Activated B cell treated with CpG ODN at 0.5 μM for 24 hours (primary cell): ENCODE measurements at regions of chr2 and their contacts with region 1.

Region 1: GRCh38 chr2:221203125-221203524 is 369.0 kb downstream of the EPHA4 start:
- DNase-seq: peak; percentile 31
- ATAC-seq: peak; percentile 92
- H3K4me3 Mint-ChIP-seq: peak overlapping the region; percentile 37
- H3K27ac Mint-ChIP-seq: peak overlapping the region; percentile 60
- H3K4me1 Mint-ChIP-seq: peaks cover 55% of the 10 kb centered on the region
- H3K27me3 Mint-ChIP-seq: no peaks in the 10 kb centered on the region
- CTCF ChIP-seq: no peak

Region 2: DNA sequence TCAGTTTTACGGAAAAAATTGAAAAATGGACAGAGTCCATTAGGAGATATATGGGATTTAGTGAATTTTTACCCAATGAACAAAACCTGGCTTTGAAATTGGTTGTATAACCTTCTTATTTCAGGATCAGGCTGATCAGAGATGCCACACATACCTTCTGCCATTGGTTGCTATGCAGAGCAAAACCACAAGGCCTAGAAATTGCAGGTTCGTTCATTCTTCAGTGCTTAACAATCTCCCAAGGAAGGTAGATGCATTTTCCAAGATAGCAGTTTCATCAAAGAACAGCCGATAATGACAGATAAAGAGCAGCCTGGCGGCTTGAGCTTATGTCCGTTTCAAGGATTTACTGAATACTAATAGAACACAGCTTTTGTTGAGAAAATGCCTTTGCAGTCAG is 499.8 kb before region 1 on chr2:
- CTCF ChIA-PET with region 1: no interaction called
- POLR2A ChIA-PET with region 1: no interaction called
- intact Hi-C with region 1: no loop called
- DNase-seq: no peak
- ATAC-seq: no peak
- H3K4me3 Mint-ChIP-seq: no peak overlapping the region
- H3K27ac Mint-ChIP-seq: no peak overlapping the region
- H3K4me1 Mint-ChIP-seq: no peaks in the 10 kb centered on the region
- H3K27me3 Mint-ChIP-seq: peaks cover 4% of the 10 kb centered on the region
- CTCF ChIP-seq: no peak

Region 3: DNA sequence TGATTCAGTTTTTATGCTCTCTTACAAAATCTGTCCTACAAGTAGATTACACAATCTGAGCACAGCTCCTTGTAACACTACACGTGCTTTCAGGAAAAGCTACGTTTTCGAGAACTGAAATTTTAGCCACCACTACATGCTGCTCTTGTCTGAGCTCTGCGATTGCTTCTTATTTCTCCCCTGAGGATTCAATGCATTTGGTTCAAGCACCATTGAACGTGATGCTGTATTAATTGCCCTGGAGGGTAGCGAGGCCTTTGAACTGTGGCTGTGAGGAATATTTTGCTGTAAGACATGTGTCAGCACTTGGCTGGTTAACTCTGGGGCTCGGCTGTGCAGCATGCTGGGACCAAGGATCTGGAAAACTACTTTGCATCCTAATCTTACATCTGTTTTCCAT is 36.8 kb before region 1 on chr2:
- CTCF ChIA-PET with region 1: no interaction called
- POLR2A ChIA-PET with region 1: interaction called, 3 read pairs
- intact Hi-C with region 1: loop called (anchors 2 kb)
- DNase-seq: no peak
- ATAC-seq: peak; percentile 85
- H3K4me3 Mint-ChIP-seq: no peak overlapping the region
- H3K27ac Mint-ChIP-seq: no peak overlapping the region
- H3K4me1 Mint-ChIP-seq: peaks cover 9% of the 10 kb centered on the region
- H3K27me3 Mint-ChIP-seq: peaks cover 4% of the 10 kb centered on the region
- CTCF ChIP-seq: no peak

Region 4: GRCh38 chr2:221189431-221190067 is 13.6 kb before region 1 on chr2:
- CTCF ChIA-PET with region 1: no interaction called
- POLR2A ChIA-PET with region 1: no interaction called
- intact Hi-C with region 1: loop called (anchors 1 kb)
- DNase-seq: no peak
- ATAC-seq: no peak
- H3K4me3 Mint-ChIP-seq: no peak overlapping the region
- H3K27ac Mint-ChIP-seq: no peak overlapping the region
- H3K4me1 Mint-ChIP-seq: no peaks in the 10 kb centered on the region
- H3K27me3 Mint-ChIP-seq: peaks cover 11% of the 10 kb centered on the region
- CTCF ChIP-seq: no peak

Region 5: DNA sequence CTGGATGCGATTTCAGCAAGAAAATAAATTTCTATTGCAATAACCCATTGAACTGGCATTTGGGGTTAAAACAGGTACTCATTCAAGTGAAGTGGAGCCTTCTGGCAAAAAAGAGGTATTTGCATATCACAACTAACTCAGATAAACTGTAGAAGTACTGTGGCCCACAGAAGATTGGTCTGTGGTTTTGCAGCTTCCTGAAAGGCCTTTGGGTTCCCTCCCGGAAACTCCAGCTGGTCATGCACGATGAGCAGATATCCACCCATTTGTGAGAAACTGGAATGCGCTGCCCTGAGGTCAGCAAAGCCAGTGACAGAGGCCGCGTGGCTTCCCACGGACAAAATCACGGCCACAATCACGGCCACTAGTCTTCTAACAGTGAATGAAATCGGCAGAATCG is 262.7 kb after region 1 on chr2:
- CTCF ChIA-PET with region 1: no interaction called
- POLR2A ChIA-PET with region 1: no interaction called
- intact Hi-C with region 1: loop called (anchors 5 kb)
- DNase-seq: peak; percentile 16
- ATAC-seq: peak; percentile 82
- H3K4me3 Mint-ChIP-seq: peak overlapping the region; percentile 71
- H3K27ac Mint-ChIP-seq: peak overlapping the region; percentile 72
- H3K4me1 Mint-ChIP-seq: peaks cover 60% of the 10 kb centered on the region
- H3K27me3 Mint-ChIP-seq: no peaks in the 10 kb centered on the region
- CTCF ChIP-seq: no peak

Region 6: GRCh38 chr2:221517696-221518151 is 314.6 kb after region 1 on chr2:
- CTCF ChIA-PET with region 1: no interaction called
- POLR2A ChIA-PET with region 1: no interaction called
- intact Hi-C with region 1: loop called (anchors 2 kb)
- DNase-seq: peak; percentile 32
- ATAC-seq: peak; percentile 76
- H3K4me3 Mint-ChIP-seq: no peak overlapping the region
- H3K27ac Mint-ChIP-seq: no peak overlapping the region
- H3K4me1 Mint-ChIP-seq: peaks cover 14% of the 10 kb centered on the region
- H3K27me3 Mint-ChIP-seq: no peaks in the 10 kb centered on the region
- CTCF ChIP-seq: no peak

Region 7: GRCh38 chr2:221554769-221555493 is 351.8 kb after region 1 on chr2:
- CTCF ChIA-PET with region 1: no interaction called
- POLR2A ChIA-PET with region 1: no interaction called
- intact Hi-C with region 1: loop called (anchors 5 kb)
- DNase-seq: no peak
- ATAC-seq: peak; percentile 92
- H3K4me3 Mint-ChIP-seq: peak overlapping the region; percentile 68
- H3K27ac Mint-ChIP-seq: peak overlapping the region; percentile 91
- H3K4me1 Mint-ChIP-seq: peaks cover 73% of the 10 kb centered on the region
- H3K27me3 Mint-ChIP-seq: no peaks in the 10 kb centered on the region
- CTCF ChIP-seq: no peak